ENCODE measurements at regions of chr20 and their contacts with region 1.

Region 1: DNA sequence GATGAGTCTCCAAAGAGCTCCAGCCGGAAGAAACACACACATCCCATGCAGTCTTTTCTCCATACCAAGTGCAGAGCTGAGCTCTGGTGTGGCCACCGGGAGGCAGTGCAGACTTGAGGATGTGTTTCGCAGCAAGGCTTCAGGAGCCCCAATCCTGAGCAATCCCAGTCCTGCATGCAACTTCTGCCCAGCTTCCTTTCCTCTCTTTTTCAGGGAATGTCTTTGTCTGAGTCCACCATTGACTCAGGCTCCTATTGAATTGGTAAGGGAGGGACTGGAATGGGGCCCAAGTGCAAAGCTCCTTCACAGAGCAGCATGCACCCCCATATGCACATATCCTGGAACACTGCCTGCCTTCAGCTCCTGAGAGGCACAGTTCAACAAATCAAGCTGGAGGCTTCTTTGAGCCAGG is 50.5 kb upstream of the ASIP start:
- DNase-seq: peak; percentile 57
- H3K4me3 ChIP-seq: no peak overlapping the region
- CTCF ChIP-seq: peak; percentile 96

Region 2: DNA sequence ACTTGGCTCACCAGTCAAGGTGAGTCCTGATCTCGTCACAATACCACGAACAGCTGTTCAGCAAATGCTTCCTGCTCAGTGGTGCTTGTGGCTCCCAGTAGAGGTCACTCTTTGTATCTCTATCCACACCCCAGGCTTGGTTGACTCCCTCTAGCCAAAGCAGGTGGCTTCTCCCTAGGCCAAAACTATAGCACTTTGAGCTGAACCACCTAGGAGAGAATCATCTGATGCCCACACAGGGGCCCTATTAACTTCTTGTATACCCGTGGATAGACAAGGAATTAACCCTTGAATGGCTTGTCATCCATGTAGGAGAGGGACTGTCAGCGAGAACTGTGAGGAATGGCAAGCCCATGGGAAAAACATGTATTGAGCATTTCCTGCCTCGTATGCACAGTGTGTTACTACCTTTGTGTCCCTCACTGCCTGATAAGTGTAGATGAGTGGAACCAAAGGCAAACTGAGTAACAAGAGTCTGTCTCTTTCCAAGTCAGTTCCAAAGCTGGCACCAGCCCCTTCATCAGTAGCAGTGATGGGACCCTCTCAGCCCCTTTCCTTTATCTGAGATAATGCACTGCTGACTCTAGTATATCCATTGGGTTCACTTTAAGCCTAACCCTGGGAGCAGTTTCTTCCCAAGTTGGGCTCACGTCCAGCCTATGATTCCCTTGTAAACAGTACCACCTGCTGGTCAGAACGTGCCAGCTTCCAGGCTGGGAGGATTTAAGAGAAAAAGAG is 121.2 kb before region 1 on chr20:
- CTCF ChIA-PET with region 1: no interaction called
- POLR2A ChIA-PET with region 1: no interaction called
- DNase-seq: no peak
- H3K4me3 ChIP-seq: no peak overlapping the region
- CTCF ChIP-seq: peak; percentile 70

Region 3: GRCh38 chr20:34129518-34130162 is 61.0 kb before region 1 on chr20:
- CTCF ChIA-PET with region 1: no interaction called
- POLR2A ChIA-PET with region 1: no interaction called
- DNase-seq: no peak
- H3K4me3 ChIP-seq: no peak overlapping the region
- CTCF ChIP-seq: peak; percentile 71

Region 4: GRCh38 chr20:34180460-34181120 is 10.1 kb before region 1 on chr20:
- CTCF ChIA-PET with region 1: interaction called, 30 read pairs
- POLR2A ChIA-PET with region 1: no interaction called
- DNase-seq: no peak
- H3K4me3 ChIP-seq: no peak overlapping the region
- CTCF ChIP-seq: no peak

Region 5: DNA sequence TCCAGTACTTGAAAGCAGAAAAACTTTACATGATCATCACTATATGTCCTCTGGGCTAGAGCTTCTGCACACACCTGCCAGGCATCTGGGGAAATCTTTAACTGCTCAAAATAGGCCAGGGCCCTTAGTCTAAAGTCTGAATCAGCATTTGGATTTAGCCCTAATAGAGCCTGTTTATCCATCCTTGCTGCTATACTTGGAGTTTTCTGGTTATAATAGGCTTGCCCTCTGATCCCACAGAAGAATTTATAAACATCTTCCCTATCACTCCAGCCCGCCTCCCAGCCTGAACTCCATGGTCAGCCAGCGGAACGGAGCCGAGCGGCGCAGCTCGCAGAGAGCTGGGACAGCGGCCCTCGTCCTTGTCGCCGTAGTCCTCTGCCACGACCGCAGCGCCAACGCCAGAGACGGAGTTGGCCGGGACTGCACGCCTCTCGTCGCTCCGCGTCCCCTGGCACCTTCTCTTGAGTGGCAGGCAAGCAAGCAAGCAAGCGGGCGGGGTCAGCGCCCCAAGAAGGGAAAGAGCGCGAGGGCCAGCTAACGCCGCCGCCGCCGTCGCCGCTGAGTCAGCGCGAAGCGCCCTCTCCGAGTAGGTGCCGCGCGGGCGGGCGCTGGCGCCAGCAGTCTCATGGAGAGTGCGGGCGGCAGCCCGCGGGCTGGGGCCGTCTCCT is 25.2 kb after region 1 on chr20:
- CTCF ChIA-PET with region 1: interaction called, 18 read pairs
- POLR2A ChIA-PET with region 1: no interaction called
- DNase-seq: no peak
- H3K4me3 ChIP-seq: peak overlapping the region; percentile 67
- CTCF ChIP-seq: no peak

Region 6: DNA sequence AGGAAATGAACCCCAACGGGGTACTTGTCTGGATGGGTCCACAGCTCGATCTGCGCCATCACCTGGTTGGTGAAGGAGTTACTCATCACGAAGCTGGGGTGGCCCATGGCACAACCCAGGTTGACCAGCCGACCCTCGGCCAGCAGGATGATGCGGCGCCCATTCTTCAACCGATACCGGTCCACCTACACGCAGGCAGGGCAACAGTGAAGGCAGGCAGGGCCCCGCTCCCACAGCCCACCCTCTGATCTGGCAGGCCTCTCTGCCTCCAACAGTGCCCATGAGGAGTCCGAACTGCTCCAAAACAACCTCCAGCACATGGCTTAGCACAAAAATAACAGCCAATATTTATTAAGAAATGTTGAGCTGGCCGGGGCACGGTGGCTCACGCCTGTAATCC is 94.8 kb after region 1 on chr20:
- CTCF ChIA-PET with region 1: interaction called, 30 read pairs
- POLR2A ChIA-PET with region 1: no interaction called
- DNase-seq: no peak
- H3K4me3 ChIP-seq: no peak overlapping the region
- CTCF ChIP-seq: no peak

Region 7: DNA sequence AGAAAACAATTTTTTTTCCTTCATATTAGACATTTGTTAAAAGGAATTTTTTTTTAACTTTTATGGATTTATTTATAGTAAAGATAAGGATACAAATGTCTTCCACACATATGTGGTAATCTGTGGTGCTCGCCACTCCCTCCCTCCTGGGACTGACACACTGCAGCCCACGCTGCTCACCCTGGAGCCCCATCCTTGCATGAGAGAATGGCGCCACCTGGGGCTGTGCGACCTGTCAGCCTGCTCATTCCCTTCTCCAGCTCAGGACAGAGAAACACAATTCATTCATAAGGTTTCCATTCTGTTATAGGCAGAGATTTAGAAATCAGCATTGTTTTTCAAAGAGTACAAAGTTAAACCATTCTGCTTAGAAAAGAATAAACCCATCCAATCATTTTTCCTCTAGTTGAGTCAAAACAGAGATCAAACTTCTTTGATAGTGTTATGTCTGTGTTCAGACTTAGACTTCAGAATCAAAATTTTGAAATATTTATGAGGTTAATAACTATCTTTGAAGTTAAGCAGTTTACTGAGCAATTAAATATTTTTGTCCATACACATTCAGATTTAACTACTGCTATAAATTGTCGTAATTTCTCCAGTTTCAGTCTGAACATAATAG is 282.7 kb after region 1 on chr20:
- CTCF ChIA-PET with region 1: interaction called, 11 read pairs
- POLR2A ChIA-PET with region 1: no interaction called
- DNase-seq: no peak
- H3K4me3 ChIP-seq: no peak overlapping the region
- CTCF ChIP-seq: peak; percentile 30

Region 8: GRCh38 chr20:34654207-34654744 is 463.6 kb after region 1 on chr20:
- CTCF ChIA-PET with region 1: no interaction called
- POLR2A ChIA-PET with region 1: no interaction called
- DNase-seq: no peak
- H3K4me3 ChIP-seq: no peak overlapping the region
- CTCF ChIP-seq: no peak

Measured in AG04449 (cell line).